ENCODE measurements at regions of chr2 and their contacts with region 1.

Region 1: GRCh38 chr2:70115646-70116442 is 28.6 kb downstream of the PCBP1 start:
- DNase-seq: no peak
- ATAC-seq: peak; percentile 46
- H3K4me3 ChIP-seq: no peak overlapping the region
- H3K4me3 Mint-ChIP-seq: peak overlapping the region in 7 of 10 donors; percentile 16 to 57 (median 36)
- H3K27ac ChIP-seq: peak overlapping the region; percentile 0
- H3K27ac Mint-ChIP-seq: peak overlapping the region in 6 of 9 donors; percentile 9 to 82 (median 52)
- H3K4me1 ChIP-seq: peaks cover 14 to 33% of the 10 kb centered on the region in 2 donors
- H3K4me1 Mint-ChIP-seq: peaks cover 34 to 75% (median 65%) of the 10 kb centered on the region in 7 donors
- H3K27me3 ChIP-seq: no peaks in the 10 kb centered on the region
- H3K27me3 Mint-ChIP-seq: no peaks in the 10 kb centered on the region

Region 2: GRCh38 chr2:70104231-70105111 is 11.4 kb before region 1 on chr2:
- CTCF ChIA-PET with region 1: interaction called, 5 read pairs
- POLR2A ChIA-PET with region 1: interaction called, 356 read pairs
- intact Hi-C with region 1: loop called in 1 of 2 experiments (anchors 1 kb)
- DNase-seq: peak in 4 of 9 donors; percentile 35 to 47 (median 46)
- ATAC-seq: no peak
- H3K4me3 ChIP-seq: peak overlapping the region; percentile 35
- H3K4me3 Mint-ChIP-seq: peak overlapping the region; percentile 60 to 87 (median 82)
- H3K27ac ChIP-seq: peak overlapping the region; percentile 72
- H3K27ac Mint-ChIP-seq: peak overlapping the region; percentile 88 to 97 (median 93)
- H3K4me1 ChIP-seq: peaks cover 37 to 45% of the 10 kb centered on the region in 2 donors
- H3K4me1 Mint-ChIP-seq: peaks cover 34 to 58% (median 55%) of the 10 kb centered on the region in 7 donors
- H3K27me3 ChIP-seq: no peaks in the 10 kb centered on the region
- H3K27me3 Mint-ChIP-seq: no peaks in the 10 kb centered on the region